CD4-positive, alpha-beta T cell (primary cell): ENCODE measurements at regions of chr6 and their contacts with region 1.

Region 1: DNA sequence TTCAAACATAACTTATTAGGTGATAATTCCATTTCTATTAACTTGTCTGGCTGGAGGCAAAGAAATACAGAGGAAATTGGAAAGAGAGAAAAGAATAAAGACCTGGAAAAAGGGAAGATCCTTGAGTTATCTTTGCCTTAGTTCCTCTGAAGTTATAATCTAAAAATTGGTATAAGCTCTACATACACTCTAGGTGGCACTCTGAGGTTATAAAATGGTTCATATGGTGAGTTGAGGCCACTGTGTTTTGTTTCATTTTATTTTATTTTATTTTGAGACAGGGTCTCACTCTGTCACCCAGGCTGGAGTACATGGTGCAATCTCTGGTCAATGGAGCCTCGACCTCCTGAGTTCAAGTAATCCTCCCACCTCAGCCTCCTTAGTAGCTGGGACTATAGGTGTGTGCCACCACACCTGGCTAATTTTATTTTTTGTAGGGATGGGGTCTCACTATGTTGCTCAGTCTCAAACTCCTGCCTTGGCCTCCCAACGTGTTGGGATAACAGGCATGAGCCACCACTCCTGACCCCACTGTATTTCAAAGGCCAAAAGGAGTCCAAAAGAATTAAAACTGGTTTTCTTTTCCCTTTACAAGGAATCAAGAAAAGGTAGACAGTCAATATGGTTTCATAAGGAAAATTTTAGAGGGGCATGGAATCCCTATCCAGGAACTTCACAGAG is 19.4 kb downstream of the GPX6 start:
- DNase-seq: peak in 2 of 14 experiments; percentile 22 to 27
- ATAC-seq: no peak
- H3K4me3 ChIP-seq: no peak overlapping the region
- H3K4me3 Mint-ChIP-seq: no peak overlapping the region
- H3K27ac ChIP-seq: no peak overlapping the region
- H3K27ac Mint-ChIP-seq: no peak overlapping the region
- H3K4me1 ChIP-seq: no peaks in the 10 kb centered on the region
- H3K4me1 Mint-ChIP-seq: no peaks in the 10 kb centered on the region
- H3K27me3 ChIP-seq: peaks cover 7 to 15% of the 10 kb centered on the region in 2 experiments
- H3K27me3 Mint-ChIP-seq: peaks cover 55% of the 10 kb centered on the region
- CTCF ChIP-seq: peak; percentile 47

Region 2: DNA sequence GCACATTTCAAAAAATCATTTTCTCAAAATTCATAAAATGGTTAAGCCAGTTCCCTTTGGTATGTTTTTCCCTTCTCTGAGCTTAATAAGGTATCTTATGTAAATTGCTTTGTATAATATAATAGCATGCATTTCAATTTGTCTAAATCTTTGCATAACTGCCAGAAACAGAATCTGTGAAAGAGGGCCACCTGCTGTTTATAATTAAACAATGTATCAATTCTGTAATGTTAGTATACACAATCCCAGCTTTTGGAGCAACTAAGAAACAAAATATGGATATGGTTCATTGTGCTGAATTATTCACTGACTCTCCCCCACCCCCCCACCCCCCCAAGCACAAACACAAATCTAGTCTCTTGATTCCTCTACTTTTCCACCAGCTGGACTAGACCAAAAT is 84.2 kb after region 1 on chr6:
- CTCF ChIA-PET with region 1: interaction called, 3 read pairs
- POLR2A ChIA-PET with region 1: no interaction called
- intact Hi-C with region 1: loop called (anchors 2 to 10 kb)
- DNase-seq: peak in 3 of 14 experiments; percentile 13 to 22 (median 20)
- ATAC-seq: no peak
- H3K4me3 ChIP-seq: no peak overlapping the region
- H3K4me3 Mint-ChIP-seq: no peak overlapping the region
- H3K27ac ChIP-seq: no peak overlapping the region
- H3K27ac Mint-ChIP-seq: no peak overlapping the region
- H3K4me1 ChIP-seq: no peaks in the 10 kb centered on the region
- H3K4me1 Mint-ChIP-seq: no peaks in the 10 kb centered on the region
- H3K27me3 ChIP-seq: peaks cover 4 to 36% of the 10 kb centered on the region in 2 experiments
- H3K27me3 Mint-ChIP-seq: peaks cover 46% of the 10 kb centered on the region
- CTCF ChIP-seq: peak; percentile 21